ENCODE measurements at regions of chr19 and their contacts with region 1.

Region 1: GRCh38 chr19:40750059-40750873 is at the start of gene ACTMAP:
- DNase-seq: peak; percentile 99
- ATAC-seq: peak; percentile 87
- H3K4me3 ChIP-seq: peak within 1 kb of the TSS; percentile 73 to 89 (median 74)
- H3K27ac ChIP-seq: peak within 1 kb of the TSS; percentile 95
- H3K4me1 ChIP-seq: peaks cover 68% of the 10 kb centered on the region
- H3K27me3 ChIP-seq: no peaks in the 10 kb centered on the region; a peak in 1 of 5 replicates
- CTCF ChIP-seq: no peak
- EP300 ChIP-seq: no peak
- POLR2A ChIP-seq: peak in 1 of 2 experiments; percentile 65; a peak in 3 of 4 replicates
- RAD21 ChIP-seq: peak; percentile 11; the same call in 1 of the 2 replicates
- total RNA-seq, gene ACTMAP: 2.2 and 3.9 TPM in 2 replicates

Region 2: GRCh38 chr19:40633207-40633606 is 117.1 kb before region 1 on chr19:
- CTCF ChIA-PET with region 1: no interaction called
- POLR2A ChIA-PET with region 1: no interaction called
- in situ Hi-C with region 1: no loop called
- intact Hi-C with region 1: no loop called
- DNase-seq: peak; percentile 25
- ATAC-seq: no peak
- H3K4me3 ChIP-seq: no peak overlapping the region
- H3K27ac ChIP-seq: no peak overlapping the region
- H3K4me1 ChIP-seq: no peaks in the 10 kb centered on the region
- H3K27me3 ChIP-seq: peaks cover 1 to 14% of the 10 kb centered on the region in 2 experiments; a peak in 3 of 5 replicates
- CTCF ChIP-seq: no peak
- EP300 ChIP-seq: no peak
- POLR2A ChIP-seq: no peak
- RAD21 ChIP-seq: no peak

Region 3: GRCh38 chr19:40650749-40651305 is 99.4 kb before region 1 on chr19:
- CTCF ChIA-PET with region 1: no interaction called
- POLR2A ChIA-PET with region 1: no interaction called
- in situ Hi-C with region 1: no loop called
- intact Hi-C with region 1: no loop called
- DNase-seq: no peak
- ATAC-seq: no peak
- H3K4me3 ChIP-seq: no peak overlapping the region
- H3K27ac ChIP-seq: no peak overlapping the region
- H3K4me1 ChIP-seq: peaks cover 12% of the 10 kb centered on the region; the same call in 1 of the 2 replicates
- H3K27me3 ChIP-seq: peaks cover 0 to 13% of the 10 kb centered on the region in 2 experiments; a peak in 2 of 5 replicates
- CTCF ChIP-seq: no peak
- EP300 ChIP-seq: no peak
- POLR2A ChIP-seq: no peak
- RAD21 ChIP-seq: no peak

Region 4: GRCh38 chr19:40716655-40717324 is 33.5 kb before region 1 on chr19 and contains the starts of genes COQ8B and ITPKC:
- CTCF ChIA-PET with region 1: no interaction called
- POLR2A ChIA-PET with region 1: interaction called, 30 read pairs
- in situ Hi-C with region 1: loop called (anchors 5 kb)
- intact Hi-C with region 1: loop called (anchors 2 kb)
- DNase-seq: peak; percentile 95
- ATAC-seq: peak; percentile 64
- H3K4me3 ChIP-seq: peak within 1 kb of the TSS; percentile 90 to 99 (median 92)
- H3K27ac ChIP-seq: peak within 1 kb of the TSS; percentile 95
- H3K4me1 ChIP-seq: peaks cover 45% of the 10 kb centered on the region
- H3K27me3 ChIP-seq: no peaks in the 10 kb centered on the region; a peak in 1 of 5 replicates
- CTCF ChIP-seq: no peak
- EP300 ChIP-seq: no peak
- POLR2A ChIP-seq: peak; percentile 64 to 73; a peak in 3 of 4 replicates
- RAD21 ChIP-seq: peak; percentile 53; the same call in 1 of the 2 replicates
- total RNA-seq, gene COQ8B: 10.3 and 17.2 TPM in 2 replicates
- total RNA-seq, gene ITPKC: 11.2 and 11.3 TPM in 2 replicates

Region 5: DNA sequence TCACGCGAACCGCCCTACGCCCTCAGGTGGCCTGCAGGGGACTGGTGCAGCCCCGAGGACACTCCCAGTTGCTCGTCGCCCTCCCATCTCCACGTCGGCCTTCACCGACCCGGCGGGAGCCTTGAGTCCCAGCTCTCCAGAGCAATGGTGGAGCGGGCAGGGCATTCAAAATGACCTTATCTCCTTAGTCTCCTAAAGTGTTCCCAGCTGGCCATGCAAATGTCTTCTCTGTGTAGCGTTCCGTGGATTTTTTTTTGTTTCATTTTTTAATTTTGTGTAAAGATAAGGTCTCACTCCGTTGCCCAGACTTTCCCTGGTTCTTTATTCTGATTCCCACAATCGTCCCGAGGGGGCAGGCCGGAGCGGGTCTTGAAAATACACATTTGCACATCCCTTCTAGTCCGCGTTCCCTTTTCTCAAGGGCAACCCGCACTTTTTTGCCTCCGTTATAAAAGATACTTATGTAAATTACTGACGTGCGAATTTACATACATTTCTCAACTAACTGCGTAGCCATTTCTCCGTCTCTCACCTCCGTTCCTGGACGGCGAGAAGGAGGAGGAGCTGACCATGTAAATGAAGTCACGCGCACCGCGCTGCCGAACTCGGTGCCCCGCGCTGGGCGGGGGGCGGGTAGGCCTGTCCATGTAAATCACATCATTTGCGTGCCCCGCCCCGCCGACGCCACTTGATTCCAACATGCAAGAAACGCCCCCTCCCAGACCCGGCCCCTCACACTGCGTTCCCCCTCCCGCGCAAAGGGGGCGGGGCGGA is 48.1 kb after region 1 on chr19:
- CTCF ChIA-PET with region 1: no interaction called
- POLR2A ChIA-PET with region 1: interaction called, 44 read pairs
- in situ Hi-C with region 1: no loop called
- intact Hi-C with region 1: loop called (anchors 1 kb)
- DNase-seq: peak; percentile 99
- ATAC-seq: peak; percentile 92
- H3K4me3 ChIP-seq: peak overlapping the region; percentile 59 to 93 (median 65)
- H3K27ac ChIP-seq: peak overlapping the region; percentile 98
- H3K4me1 ChIP-seq: peaks cover 49% of the 10 kb centered on the region
- H3K27me3 ChIP-seq: no peaks in the 10 kb centered on the region; a peak in 1 of 5 replicates
- CTCF ChIP-seq: peak; percentile 89
- EP300 ChIP-seq: no peak
- POLR2A ChIP-seq: peak; percentile 67 to 94
- RAD21 ChIP-seq: peak; percentile 83

Region 6: DNA sequence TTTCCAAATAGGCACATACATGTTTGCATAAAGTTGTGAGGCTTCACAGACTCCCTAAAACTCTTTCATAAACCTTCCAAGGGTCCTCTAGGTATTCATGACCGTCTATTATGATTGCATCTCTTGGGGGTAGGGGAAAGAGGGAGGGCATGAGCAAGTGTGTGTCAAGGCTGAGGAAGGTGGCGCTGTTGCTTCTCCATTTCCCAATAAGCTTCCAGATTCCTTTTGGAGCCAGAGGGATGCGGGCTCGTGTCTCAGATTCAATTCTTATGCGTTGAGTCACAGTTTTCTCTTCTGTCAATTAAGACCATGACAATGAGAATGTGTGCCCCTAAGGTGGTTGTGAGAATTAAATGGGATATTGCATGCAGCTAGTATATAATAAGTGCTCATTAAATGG is 182.8 kb after region 1 on chr19:
- CTCF ChIA-PET with region 1: no interaction called
- POLR2A ChIA-PET with region 1: no interaction called
- in situ Hi-C with region 1: no loop called
- intact Hi-C with region 1: no loop called
- DNase-seq: no peak
- ATAC-seq: no peak
- H3K4me3 ChIP-seq: no peak overlapping the region
- H3K27ac ChIP-seq: no peak overlapping the region
- H3K4me1 ChIP-seq: no peaks in the 10 kb centered on the region
- H3K27me3 ChIP-seq: peaks cover 0 to 33% of the 10 kb centered on the region in 2 experiments; a peak in 3 of 5 replicates
- CTCF ChIP-seq: 0 out of 2 replicates have a peak, but pooled peaks have one; percentile 15
- EP300 ChIP-seq: no peak
- POLR2A ChIP-seq: no peak
- RAD21 ChIP-seq: no peak

Measured in HepG2 (cell line).